HepG2 (cell line): ENCODE measurements at regions of chr5 and their contacts with region 1.

Region 1: GRCh38 chr5:82018462-82018861 is 46.6 kb downstream of the ATG10 start:
- DNase-seq: peak; percentile 80
- ATAC-seq: peak; percentile 96
- H3K4me3 ChIP-seq: no peak overlapping the region; a peak in 1 of 6 replicates
- H3K27ac ChIP-seq: peak overlapping the region; percentile 30
- H3K4me1 ChIP-seq: peaks cover 27% of the 10 kb centered on the region
- H3K27me3 ChIP-seq: no peaks in the 10 kb centered on the region
- CTCF ChIP-seq: peak; percentile 65
- EP300 ChIP-seq: peak in 1 of 2 experiments; percentile 65; a peak in 1 of 4 replicates
- POLR2A ChIP-seq: no peak
- RAD21 ChIP-seq: no peak

Region 2: DNA sequence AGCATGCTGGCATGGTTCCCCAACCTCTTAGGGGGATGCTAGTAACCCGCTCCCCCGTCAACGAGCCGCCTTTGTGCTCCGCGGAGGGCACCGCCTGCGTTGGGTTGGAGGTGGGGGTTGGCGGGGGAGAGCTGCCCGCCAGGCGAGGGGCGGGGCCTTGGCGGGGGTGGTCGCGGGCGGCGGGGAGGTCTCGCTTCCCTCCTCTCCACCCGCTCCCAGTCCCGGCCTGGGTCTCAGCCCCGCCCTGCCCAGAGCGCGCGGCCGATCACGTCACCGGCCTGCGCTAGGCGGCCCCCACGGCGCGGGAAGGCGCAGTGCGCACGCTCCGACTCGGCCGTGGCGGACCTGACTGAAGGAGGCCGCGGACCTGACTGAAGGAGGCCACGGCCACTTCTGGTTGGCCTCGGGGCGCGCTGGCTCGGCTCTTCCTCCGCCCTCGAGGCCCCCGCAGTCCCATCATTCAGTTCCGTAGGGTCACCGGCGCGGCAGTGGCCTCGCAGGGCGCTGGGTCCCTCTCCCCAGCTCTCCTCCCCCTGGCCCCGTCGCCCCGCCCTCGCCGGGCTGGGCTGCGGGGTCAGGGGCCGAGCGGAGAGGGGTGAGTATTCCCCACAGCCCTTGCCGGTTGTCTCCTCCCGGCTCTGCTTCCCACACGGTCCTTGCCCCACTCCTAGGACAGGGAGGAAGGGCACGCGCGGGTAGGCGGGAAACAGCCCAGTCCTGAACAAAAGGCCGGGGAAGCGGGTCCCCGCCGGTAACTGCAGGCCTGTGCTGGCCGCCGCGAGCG is 46.6 kb before region 1 on chr5 and contains the start of gene ATG10:
- CTCF ChIA-PET with region 1: no interaction called
- POLR2A ChIA-PET with region 1: interaction called, 3 read pairs
- in situ Hi-C with region 1: no loop called
- intact Hi-C with region 1: loop called (anchors 2 kb)
- DNase-seq: peak; percentile 73
- ATAC-seq: peak; percentile 97
- H3K4me3 ChIP-seq: peak within 1 kb of the TSS; percentile 73 to 86 (median 84)
- H3K27ac ChIP-seq: peak within 1 kb of the TSS; percentile 95
- H3K4me1 ChIP-seq: peaks cover 26% of the 10 kb centered on the region; the same call in 1 of the 2 replicates
- H3K27me3 ChIP-seq: no peaks in the 10 kb centered on the region; a peak in 1 of 5 replicates
- CTCF ChIP-seq: no peak
- EP300 ChIP-seq: no peak
- POLR2A ChIP-seq: peak; percentile 82 to 91
- RAD21 ChIP-seq: no peak; the same call in none of the 2 replicates
- total RNA-seq, gene ATG10: 5.6 and 5.7 TPM in 2 replicates